ENCODE measurements at regions of chr19 and their contacts with region 1.

Region 1: GRCh38 chr19:48933382-48933932 is at the start of gene DHDH:
- DNase-seq: peak; percentile 95 to 96
- H3K4me3 ChIP-seq: peak within 1 kb of the TSS; percentile 55
- H3K4me3 Mint-ChIP-seq: peak within 1 kb of the TSS; percentile 89
- H3K27ac Mint-ChIP-seq: peak within 1 kb of the TSS; percentile 50
- H3K4me1 ChIP-seq: peaks cover 3% of the 10 kb centered on the region
- H3K4me1 Mint-ChIP-seq: peaks cover 14% of the 10 kb centered on the region
- H3K27me3 ChIP-seq: no peaks in the 10 kb centered on the region
- H3K27me3 Mint-ChIP-seq: no peaks in the 10 kb centered on the region
- CTCF ChIP-seq: no peak
- total RNA-seq, gene DHDH: 2.6 and 3.3 TPM in 2 replicates

Region 2: DNA sequence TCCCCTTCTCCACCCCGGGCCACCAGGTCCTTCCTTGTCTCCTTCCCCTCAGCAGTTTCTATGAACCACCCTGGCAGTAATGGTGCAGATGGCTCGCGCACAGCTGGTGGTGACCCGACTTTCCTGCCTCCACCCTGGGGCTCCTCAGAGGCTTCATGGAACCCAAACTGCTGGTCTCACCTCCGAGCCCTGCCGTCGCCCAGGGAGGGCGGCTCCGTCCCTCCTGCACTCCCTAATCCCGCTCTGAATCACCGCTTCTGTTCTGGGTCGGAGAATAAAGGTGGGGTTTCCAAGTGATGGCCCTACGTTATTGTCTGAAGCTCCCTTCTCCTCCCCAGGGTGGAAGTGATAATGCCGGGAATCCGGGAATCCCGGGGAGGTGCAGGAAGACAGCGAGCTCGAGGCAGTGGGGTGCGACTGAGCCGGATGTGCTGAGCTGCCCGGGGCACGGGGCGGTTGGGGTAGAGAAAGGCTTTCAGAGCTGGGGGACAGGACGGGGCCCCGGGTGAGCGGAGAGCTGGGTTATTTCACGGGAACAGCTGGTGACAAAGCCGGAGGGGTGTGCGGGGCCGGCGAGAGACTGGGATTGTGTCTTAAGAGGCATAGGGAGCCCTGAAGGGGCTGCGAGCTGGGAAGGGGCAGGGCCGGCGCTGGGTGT is 237.0 kb before region 1 on chr19:
- CTCF ChIA-PET with region 1: no interaction called
- POLR2A ChIA-PET with region 1: interaction called, 24 read pairs
- intact Hi-C with region 1: no loop called
- DNase-seq: peak in 1 of 2 experiments; percentile 38
- H3K4me3 ChIP-seq: peak overlapping the region; percentile 72
- H3K4me3 Mint-ChIP-seq: peak overlapping the region; percentile 99
- H3K27ac Mint-ChIP-seq: peak overlapping the region; percentile 90
- H3K4me1 ChIP-seq: peaks cover 17% of the 10 kb centered on the region
- H3K4me1 Mint-ChIP-seq: peaks cover 7% of the 10 kb centered on the region
- H3K27me3 ChIP-seq: no peaks in the 10 kb centered on the region
- H3K27me3 Mint-ChIP-seq: no peaks in the 10 kb centered on the region
- CTCF ChIP-seq: no peak

Region 3: GRCh38 chr19:48770260-48770659 is 163.2 kb before region 1 on chr19:
- CTCF ChIA-PET with region 1: no interaction called
- POLR2A ChIA-PET with region 1: no interaction called
- intact Hi-C with region 1: no loop called
- DNase-seq: no peak
- H3K4me3 ChIP-seq: no peak overlapping the region
- H3K4me3 Mint-ChIP-seq: no peak overlapping the region
- H3K27ac Mint-ChIP-seq: no peak overlapping the region
- H3K4me1 ChIP-seq: peaks cover 4% of the 10 kb centered on the region; the same call in 1 of the 2 replicates
- H3K4me1 Mint-ChIP-seq: no peaks in the 10 kb centered on the region
- H3K27me3 ChIP-seq: no peaks in the 10 kb centered on the region
- H3K27me3 Mint-ChIP-seq: no peaks in the 10 kb centered on the region
- CTCF ChIP-seq: no peak

Region 4: DNA sequence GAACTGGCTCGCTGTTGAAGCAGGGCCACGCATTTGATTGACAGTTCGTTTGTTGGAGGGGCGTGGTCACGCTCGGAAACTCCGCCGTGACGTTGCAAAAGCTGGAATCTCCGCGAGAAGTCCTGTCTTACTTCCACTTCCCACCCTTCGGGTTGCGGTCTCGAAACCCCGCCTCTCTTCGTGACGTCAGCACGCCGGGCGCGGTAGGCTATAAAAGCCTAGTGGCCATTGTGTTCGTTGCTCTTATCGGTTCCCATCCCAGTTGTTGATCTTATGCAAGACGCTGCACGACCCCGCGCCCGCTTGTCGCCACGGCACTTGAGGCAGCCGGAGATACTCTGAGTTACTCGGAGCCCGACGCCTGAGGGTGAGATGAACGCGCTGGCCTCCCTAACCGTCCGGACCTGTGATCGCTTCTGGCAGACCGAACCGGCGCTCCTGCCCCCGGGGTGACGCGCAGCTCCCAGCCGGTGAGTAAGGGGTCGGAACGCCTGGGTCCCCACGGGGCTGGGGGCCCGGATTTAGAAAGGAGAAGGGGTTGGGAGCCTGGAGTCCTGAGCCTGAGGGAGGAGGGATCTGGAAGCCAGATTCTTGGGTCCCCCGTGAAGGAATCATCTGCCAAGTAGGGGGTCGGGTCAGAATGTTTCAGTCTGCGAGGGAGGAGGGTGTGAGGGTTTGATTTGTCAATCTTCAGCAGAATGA is 61.1 kb before region 1 on chr19 and contains the start of gene PPP1R15A:
- CTCF ChIA-PET with region 1: no interaction called
- POLR2A ChIA-PET with region 1: interaction called, 9 read pairs
- intact Hi-C with region 1: loop called (anchors 2 kb)
- DNase-seq: peak; percentile 99
- H3K4me3 ChIP-seq: peak within 1 kb of the TSS; percentile 99
- H3K4me3 Mint-ChIP-seq: peak within 1 kb of the TSS; percentile 99
- H3K27ac Mint-ChIP-seq: peak within 1 kb of the TSS; percentile 100
- H3K4me1 ChIP-seq: peaks cover 56% of the 10 kb centered on the region
- H3K4me1 Mint-ChIP-seq: peaks cover 49% of the 10 kb centered on the region
- H3K27me3 ChIP-seq: no peaks in the 10 kb centered on the region
- H3K27me3 Mint-ChIP-seq: peaks cover 3% of the 10 kb centered on the region
- CTCF ChIP-seq: no peak
- total RNA-seq, gene PPP1R15A: 83.3 and 94.7 TPM in 2 replicates

Region 5: GRCh38 chr19:48887861-48888612 is 45.4 kb before region 1 on chr19:
- CTCF ChIA-PET with region 1: no interaction called
- POLR2A ChIA-PET with region 1: no interaction called
- intact Hi-C with region 1: no loop called
- DNase-seq: peak; percentile 67 to 83
- H3K4me3 ChIP-seq: no peak overlapping the region
- H3K4me3 Mint-ChIP-seq: no peak overlapping the region
- H3K27ac Mint-ChIP-seq: peak overlapping the region; percentile 88
- H3K4me1 ChIP-seq: peaks cover 45% of the 10 kb centered on the region
- H3K4me1 Mint-ChIP-seq: peaks cover 38% of the 10 kb centered on the region
- H3K27me3 ChIP-seq: no peaks in the 10 kb centered on the region
- H3K27me3 Mint-ChIP-seq: no peaks in the 10 kb centered on the region
- CTCF ChIP-seq: no peak

Region 6: DNA sequence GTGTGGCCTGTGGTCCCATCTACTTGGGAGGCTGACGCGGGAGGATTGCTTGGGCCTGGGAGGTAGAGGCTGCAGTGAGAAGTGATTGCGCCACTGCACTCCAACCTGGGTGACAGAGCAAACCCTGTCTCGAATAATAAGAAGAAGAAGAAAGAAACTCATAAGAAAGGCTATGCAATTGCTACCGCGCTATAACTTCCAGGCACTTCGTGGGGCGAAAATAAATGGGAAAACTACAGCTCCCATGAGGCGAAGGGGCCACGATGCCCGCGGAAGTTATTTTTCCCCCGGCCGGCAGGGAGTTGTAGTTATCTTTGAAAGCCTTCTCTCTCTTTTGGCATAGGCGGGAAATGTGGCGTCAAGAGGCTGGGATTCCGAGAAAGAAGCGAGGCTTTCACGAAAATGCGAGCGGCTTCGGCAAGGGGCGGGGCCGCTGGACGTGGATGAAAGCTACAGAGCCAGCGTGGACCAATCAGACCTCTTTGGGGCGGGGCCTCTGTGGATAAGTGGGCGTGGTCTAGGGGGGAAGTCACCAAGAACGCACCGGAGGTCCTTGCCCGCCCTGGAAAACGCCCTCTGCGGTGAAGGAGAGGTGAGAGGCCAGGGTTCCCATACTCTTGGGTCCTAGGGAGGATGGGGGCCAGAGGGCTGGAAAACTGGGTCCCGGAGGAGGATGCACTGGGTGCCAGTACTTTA is 33.5 kb before region 1 on chr19 and contains the start of gene NUCB1:
- CTCF ChIA-PET with region 1: interaction called, 4 read pairs
- POLR2A ChIA-PET with region 1: interaction called, 14 read pairs
- intact Hi-C with region 1: loop called (anchors 2 kb)
- DNase-seq: peak; percentile 100
- H3K4me3 ChIP-seq: peak within 1 kb of the TSS; percentile 76
- H3K4me3 Mint-ChIP-seq: peak within 1 kb of the TSS; percentile 92
- H3K27ac Mint-ChIP-seq: peak within 1 kb of the TSS; percentile 89
- H3K4me1 ChIP-seq: 0 out of 2 replicates have a peak, but pooled peaks cover 13% of the 10 kb centered on the region
- H3K4me1 Mint-ChIP-seq: peaks cover 13% of the 10 kb centered on the region
- H3K27me3 ChIP-seq: no peaks in the 10 kb centered on the region
- H3K27me3 Mint-ChIP-seq: no peaks in the 10 kb centered on the region
- CTCF ChIP-seq: peak in 1 of 2 experiments; percentile 38
- total RNA-seq, gene NUCB1: 140 and 142 TPM in 2 replicates

Region 7: GRCh38 chr19:48954595-48955310 is 21.3 kb after region 1 on chr19 and contains the start of gene BAX:
- CTCF ChIA-PET with region 1: interaction called, 4 read pairs
- POLR2A ChIA-PET with region 1: interaction called, 5 read pairs
- intact Hi-C with region 1: loop called (anchors 1 kb)
- DNase-seq: peak; percentile 99
- H3K4me3 ChIP-seq: peak within 1 kb of the TSS; percentile 70
- H3K4me3 Mint-ChIP-seq: peak within 1 kb of the TSS; percentile 85
- H3K27ac Mint-ChIP-seq: peak within 1 kb of the TSS; percentile 91
- H3K4me1 ChIP-seq: peaks cover 8% of the 10 kb centered on the region
- H3K4me1 Mint-ChIP-seq: peaks cover 6% of the 10 kb centered on the region
- H3K27me3 ChIP-seq: no peaks in the 10 kb centered on the region
- H3K27me3 Mint-ChIP-seq: no peaks in the 10 kb centered on the region
- CTCF ChIP-seq: peak in 1 of 2 experiments; percentile 14
- total RNA-seq, gene BAX: 107 and 110 TPM in 2 replicates

Region 8: DNA sequence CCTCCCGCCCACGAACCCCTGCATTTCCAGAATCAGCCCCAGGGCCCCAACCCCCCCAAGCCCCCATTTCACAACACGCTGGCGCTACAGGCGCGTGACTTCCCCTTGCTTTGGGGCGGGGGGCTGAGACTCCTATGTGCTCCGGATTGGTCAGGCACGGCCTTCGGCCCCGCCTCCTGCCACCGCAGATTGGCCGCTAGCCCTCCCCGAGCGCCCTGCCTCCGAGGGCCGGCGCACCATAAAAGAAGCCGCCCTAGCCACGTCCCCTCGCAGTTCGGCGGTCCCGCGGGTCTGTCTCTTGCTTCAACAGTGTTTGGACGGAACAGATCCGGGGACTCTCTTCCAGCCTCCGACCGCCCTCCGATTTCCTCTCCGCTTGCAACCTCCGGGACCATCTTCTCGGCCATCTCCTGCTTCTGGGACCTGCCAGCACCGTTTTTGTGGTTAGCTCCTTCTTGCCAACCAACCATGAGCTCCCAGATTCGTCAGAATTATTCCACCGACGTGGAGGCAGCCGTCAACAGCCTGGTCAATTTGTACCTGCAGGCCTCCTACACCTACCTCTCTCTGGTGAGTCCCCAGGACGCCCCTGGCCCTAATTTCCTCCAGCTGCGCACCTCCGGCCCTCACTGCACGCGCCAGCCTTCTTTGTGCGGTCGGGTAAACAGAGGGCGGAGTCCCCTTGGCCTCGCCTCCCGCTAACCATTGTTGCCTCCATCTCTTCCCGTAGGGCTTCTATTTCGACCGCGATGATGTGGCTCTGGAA is 31.8 kb after region 1 on chr19 and contains the start of gene FTL:
- CTCF ChIA-PET with region 1: interaction called, 5 read pairs
- POLR2A ChIA-PET with region 1: interaction called, 8 read pairs
- intact Hi-C with region 1: loop called (anchors 2 kb)
- DNase-seq: peak; percentile 99
- H3K4me3 ChIP-seq: peak within 1 kb of the TSS; percentile 95
- H3K4me3 Mint-ChIP-seq: peak within 1 kb of the TSS; percentile 96
- H3K27ac Mint-ChIP-seq: peak within 1 kb of the TSS; percentile 96
- H3K4me1 ChIP-seq: peaks cover 31% of the 10 kb centered on the region
- H3K4me1 Mint-ChIP-seq: peaks cover 40% of the 10 kb centered on the region
- H3K27me3 ChIP-seq: no peaks in the 10 kb centered on the region
- H3K27me3 Mint-ChIP-seq: no peaks in the 10 kb centered on the region
- CTCF ChIP-seq: no peak
- total RNA-seq, gene FTL: 2,542 and 2,963 TPM in 2 replicates